OCI-LY7 (cell line): ENCODE measurements at regions of chr1 and their contacts with region 1.

Region 1: GRCh38 chr1:206734499-206735142 is 36.0 kb upstream of the IL19 start:
- DNase-seq: peak; percentile 67
- H3K4me3 ChIP-seq: no peak overlapping the region
- H3K27ac ChIP-seq: no peak overlapping the region
- H3K4me1 ChIP-seq: peaks cover 17% of the 10 kb centered on the region
- CTCF ChIP-seq: peak; percentile 91

Region 2: DNA sequence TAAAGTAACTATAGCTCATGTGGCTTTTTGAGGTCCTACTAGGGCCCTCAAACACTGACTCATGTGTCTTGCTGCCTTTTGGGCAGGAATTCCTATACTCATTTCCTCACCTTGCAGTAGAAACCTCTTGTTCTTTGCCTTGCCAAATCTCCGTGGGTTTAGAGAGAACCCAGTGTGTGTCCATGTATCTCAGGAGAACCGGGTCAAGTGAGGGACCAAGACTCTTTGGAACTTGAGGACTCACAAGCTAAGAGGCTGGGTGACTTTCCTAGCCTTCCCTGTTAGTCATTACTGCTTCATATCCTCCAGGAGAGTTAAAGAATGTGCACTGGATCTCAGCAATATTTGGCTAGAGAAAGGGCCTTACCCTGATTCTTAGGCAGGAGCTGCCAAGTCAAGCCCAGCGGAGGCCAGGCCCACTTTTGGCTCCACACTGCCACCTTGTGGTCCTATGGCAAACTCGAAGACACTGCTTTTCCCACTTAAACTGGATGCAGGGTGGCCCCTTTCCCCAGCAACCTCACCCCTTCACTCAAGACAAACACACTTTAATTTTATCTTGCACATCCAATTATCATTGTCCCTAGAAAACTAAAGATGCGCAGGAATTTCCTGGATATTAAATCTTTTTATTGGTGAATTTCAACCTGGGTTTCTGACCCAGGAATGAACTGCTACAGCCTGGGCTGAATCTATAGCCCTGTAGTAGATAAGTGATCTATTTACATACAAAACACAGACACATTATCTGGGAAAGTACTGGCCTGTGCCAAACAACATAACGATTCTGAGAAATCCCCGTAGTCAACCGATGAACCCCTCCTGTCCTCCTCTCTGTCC is 628.1 kb before region 1 on chr1:
- CTCF ChIA-PET with region 1: no interaction called
- POLR2A ChIA-PET with region 1: no interaction called
- intact Hi-C with region 1: no loop called
- DNase-seq: peak; percentile 85
- H3K4me3 ChIP-seq: no peak overlapping the region
- H3K27ac ChIP-seq: no peak overlapping the region
- H3K4me1 ChIP-seq: peaks cover 6% of the 10 kb centered on the region
- CTCF ChIP-seq: peak; percentile 97

Region 3: GRCh38 chr1:206651958-206652890 is 82.4 kb before region 1 on chr1:
- CTCF ChIA-PET with region 1: no interaction called
- POLR2A ChIA-PET with region 1: no interaction called
- intact Hi-C with region 1: no loop called
- DNase-seq: no peak
- H3K4me3 ChIP-seq: no peak overlapping the region
- H3K27ac ChIP-seq: no peak overlapping the region
- H3K4me1 ChIP-seq: no peaks in the 10 kb centered on the region
- CTCF ChIP-seq: no peak

Region 4: GRCh38 chr1:206770531-206771337 is 36.1 kb after region 1 on chr1 and contains the start of gene IL19:
- CTCF ChIA-PET with region 1: no interaction called
- POLR2A ChIA-PET with region 1: interaction called, 11 read pairs
- intact Hi-C with region 1: no loop called
- DNase-seq: no peak
- H3K4me3 ChIP-seq: no peak within 1 kb of the TSS
- H3K27ac ChIP-seq: no peak within 1 kb of the TSS
- H3K4me1 ChIP-seq: peaks cover 29% of the 10 kb centered on the region
- CTCF ChIP-seq: no peak
- total RNA-seq, gene IL19: not detected in 2 replicates

Region 5: GRCh38 chr1:206782448-206782847 is 47.8 kb after region 1 on chr1:
- CTCF ChIA-PET with region 1: interaction called, 3 read pairs
- POLR2A ChIA-PET with region 1: interaction called, 3 read pairs
- intact Hi-C with region 1: loop called (anchors 2 kb)
- DNase-seq: peak; percentile 92
- H3K4me3 ChIP-seq: peak overlapping the region; percentile 30
- H3K27ac ChIP-seq: peak overlapping the region; percentile 64
- H3K4me1 ChIP-seq: peaks cover 53% of the 10 kb centered on the region
- CTCF ChIP-seq: no peak

Region 6: DNA sequence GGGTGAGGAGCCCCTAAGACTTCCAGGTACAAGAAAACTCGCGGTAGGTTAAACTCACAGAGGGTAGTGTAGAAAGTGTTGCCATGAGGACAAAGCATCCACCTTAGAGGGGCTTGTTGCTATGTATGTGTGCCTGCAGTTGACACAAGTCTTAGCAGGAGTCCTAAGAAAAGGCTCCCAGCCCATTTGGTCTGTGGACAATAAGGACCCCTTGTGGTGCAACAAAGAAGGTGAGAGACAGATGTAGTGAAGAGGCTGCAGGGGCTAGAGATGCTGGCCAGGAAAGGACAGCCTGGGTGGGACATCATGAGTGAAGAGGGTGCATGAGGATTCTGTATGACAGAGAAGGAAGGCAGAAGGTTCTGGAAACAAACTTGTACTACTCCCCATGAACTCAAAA is 74.0 kb after region 1 on chr1:
- CTCF ChIA-PET with region 1: interaction called, 13 read pairs
- POLR2A ChIA-PET with region 1: no interaction called
- intact Hi-C with region 1: loop called (anchors 1 kb)
- DNase-seq: peak; percentile 71
- H3K4me3 ChIP-seq: no peak overlapping the region
- H3K27ac ChIP-seq: no peak overlapping the region
- H3K4me1 ChIP-seq: peaks cover 1% of the 10 kb centered on the region
- CTCF ChIP-seq: peak; percentile 74

Region 7: DNA sequence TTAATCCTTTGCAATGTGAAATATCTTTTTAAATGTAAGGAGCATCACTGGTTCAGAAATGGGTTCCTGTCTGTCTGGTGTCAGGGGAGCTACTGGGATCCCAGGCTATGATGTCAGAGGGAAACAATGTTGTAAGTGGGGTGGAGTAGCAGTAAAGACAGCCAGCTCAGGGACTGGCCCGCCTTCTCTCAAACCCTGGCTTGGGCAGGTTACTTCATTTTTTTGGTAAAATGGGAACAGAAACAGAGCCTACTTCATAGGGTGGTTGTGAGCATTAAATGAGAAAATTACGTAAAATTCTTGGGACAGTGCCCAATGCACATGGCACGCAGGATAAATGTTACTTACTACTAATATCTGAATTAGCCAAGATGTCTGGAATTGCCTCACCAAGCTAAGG is 100.1 kb after region 1 on chr1:
- CTCF ChIA-PET with region 1: no interaction called
- POLR2A ChIA-PET with region 1: no interaction called
- intact Hi-C with region 1: no loop called
- DNase-seq: no peak
- H3K4me3 ChIP-seq: no peak overlapping the region
- H3K27ac ChIP-seq: no peak overlapping the region
- H3K4me1 ChIP-seq: peaks cover 5% of the 10 kb centered on the region
- CTCF ChIP-seq: no peak